Activated CD4-positive, alpha-beta memory T cell treated with anti-CD3 and anti-CD28 coated beads, Interleukin-2, amount 10 ng/mL, durations not matched to agents 7 days and 5 days (primary cell): ENCODE measurements at regions of chr20 and their contacts with region 1.

Region 1: GRCh38 chr20:36754656-36755222 is 8.8 kb upstream of the NDRG3 start:
- DNase-seq: peak; percentile 47
- H3K4me3 Mint-ChIP-seq: no peak overlapping the region
- H3K27ac Mint-ChIP-seq: no peak overlapping the region
- H3K4me1 Mint-ChIP-seq: peaks cover 15% of the 10 kb centered on the region
- H3K27me3 Mint-ChIP-seq: no peaks in the 10 kb centered on the region

Region 2: DNA sequence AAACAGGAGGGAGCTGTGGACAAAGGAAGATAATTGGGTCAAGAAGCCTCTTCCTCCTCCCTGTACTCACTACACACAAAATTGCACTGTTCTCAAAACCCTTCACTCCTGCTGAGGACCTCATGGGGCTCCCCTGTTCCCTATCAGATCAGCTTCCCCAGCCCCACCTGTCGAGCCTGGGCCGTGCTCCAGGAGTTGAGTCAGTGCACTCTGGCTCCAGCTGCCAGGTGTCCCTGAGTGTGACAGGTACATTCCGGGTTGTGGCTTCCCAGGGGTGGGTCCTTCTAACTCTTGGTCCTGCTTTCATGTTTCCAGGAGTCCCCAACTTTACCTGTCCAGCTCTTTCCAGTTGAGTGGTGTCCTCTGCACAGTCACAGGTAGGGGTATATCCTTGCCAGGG is 140.8 kb before region 1 on chr20:
- CTCF ChIA-PET with region 1: interaction called, 28 read pairs
- POLR2A ChIA-PET with region 1: interaction called, 3 read pairs
- DNase-seq: no peak
- H3K4me3 Mint-ChIP-seq: no peak overlapping the region
- H3K27ac Mint-ChIP-seq: no peak overlapping the region
- H3K4me1 Mint-ChIP-seq: peaks cover 9% of the 10 kb centered on the region
- H3K27me3 Mint-ChIP-seq: no peaks in the 10 kb centered on the region

Region 3: DNA sequence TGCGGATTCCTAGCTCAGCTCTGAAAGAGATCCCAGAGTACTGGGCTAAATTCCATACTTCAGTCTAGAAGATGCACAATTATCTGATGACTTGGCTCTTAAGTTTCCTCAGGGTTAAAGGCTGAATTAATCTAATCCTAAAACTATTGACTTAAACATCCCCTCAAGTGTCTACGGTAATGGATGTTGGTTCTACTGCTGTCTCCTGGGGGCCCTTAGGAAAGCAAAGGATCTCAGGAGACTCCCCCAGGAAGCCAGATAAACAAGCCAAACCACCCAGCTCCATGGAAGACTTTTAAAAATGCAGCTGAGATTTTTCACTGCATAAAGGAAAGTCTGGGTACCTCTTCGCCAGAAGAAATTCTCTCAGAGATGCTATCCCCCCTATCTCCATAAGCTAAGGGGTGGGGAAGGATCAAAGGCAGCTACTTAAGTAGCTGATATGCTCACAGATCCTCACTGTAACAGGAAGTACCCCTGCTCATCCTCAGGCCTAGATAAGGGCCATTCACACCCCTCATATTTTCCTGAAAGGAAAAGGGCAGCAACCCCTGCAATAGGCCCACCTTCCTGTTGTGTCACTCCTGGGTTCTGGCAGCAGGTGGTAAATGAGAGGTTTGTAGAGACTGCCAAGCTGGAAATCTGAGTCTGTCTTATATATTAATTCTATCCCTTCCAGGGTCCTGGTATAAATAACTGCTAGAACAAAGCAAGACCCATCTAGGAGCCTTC is 18.1 kb before region 1 on chr20:
- CTCF ChIA-PET with region 1: interaction called, 14 read pairs
- POLR2A ChIA-PET with region 1: interaction called, 3 read pairs
- DNase-seq: no peak
- H3K4me3 Mint-ChIP-seq: no peak overlapping the region
- H3K27ac Mint-ChIP-seq: no peak overlapping the region
- H3K4me1 Mint-ChIP-seq: peaks cover 30% of the 10 kb centered on the region
- H3K27me3 Mint-ChIP-seq: no peaks in the 10 kb centered on the region

Region 4: DNA sequence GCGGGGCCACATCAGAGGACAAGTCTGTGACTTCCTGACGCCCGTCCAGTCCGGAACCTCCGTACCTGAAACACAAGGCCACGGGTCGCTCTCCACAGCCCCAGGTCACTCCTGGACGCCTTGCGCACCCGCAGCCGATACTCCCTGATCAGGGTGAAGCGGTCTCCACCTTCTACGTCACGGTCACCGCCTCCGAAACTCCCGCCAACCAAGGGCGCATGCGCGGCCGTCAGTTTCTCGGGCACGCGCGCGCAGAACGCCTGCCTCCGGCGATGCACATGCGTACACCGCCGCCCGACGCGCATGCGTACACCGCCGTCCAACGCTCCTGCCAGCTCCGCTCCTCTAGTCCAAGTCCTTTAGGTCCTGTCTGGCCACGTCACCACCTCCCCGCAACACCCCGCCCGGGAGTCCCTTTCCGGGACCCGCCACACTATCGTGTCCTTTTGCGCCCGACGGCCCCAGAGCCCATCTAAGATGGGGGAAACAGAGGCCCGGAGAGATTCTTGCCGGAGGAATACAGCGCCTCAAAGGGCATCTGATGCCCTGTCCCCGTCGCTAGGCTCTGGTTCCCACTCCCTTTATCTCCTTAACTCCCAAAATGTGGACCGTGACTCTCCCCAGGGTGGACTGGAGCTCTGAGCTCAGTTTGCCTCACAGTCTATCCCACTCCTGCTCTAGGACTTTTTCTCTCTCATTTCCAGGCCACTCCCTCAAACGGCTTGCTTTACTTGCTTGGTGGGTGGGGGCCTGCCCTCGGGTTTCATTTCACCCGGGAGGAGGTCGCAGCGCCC is 19.1 kb after region 1 on chr20 and contains the start of gene DSN1:
- CTCF ChIA-PET with region 1: interaction called, 15 read pairs
- POLR2A ChIA-PET with region 1: interaction called, 8 read pairs
- DNase-seq: peak; percentile 99
- H3K4me3 Mint-ChIP-seq: peak within 1 kb of the TSS; percentile 91
- H3K27ac Mint-ChIP-seq: peak within 1 kb of the TSS; percentile 85
- H3K4me1 Mint-ChIP-seq: peaks cover 42% of the 10 kb centered on the region
- H3K27me3 Mint-ChIP-seq: peaks cover 2% of the 10 kb centered on the region
- total RNA-seq, gene DSN1: 31.9 to 32.0 TPM

Region 5: GRCh38 chr20:36895036-36895435 is 140.3 kb after region 1 on chr20:
- CTCF ChIA-PET with region 1: no interaction called
- POLR2A ChIA-PET with region 1: no interaction called
- DNase-seq: no peak
- H3K4me3 Mint-ChIP-seq: no peak overlapping the region
- H3K27ac Mint-ChIP-seq: peak overlapping the region; percentile 60
- H3K4me1 Mint-ChIP-seq: peaks cover 10% of the 10 kb centered on the region
- H3K27me3 Mint-ChIP-seq: no peaks in the 10 kb centered on the region